Activated CD4-positive, alpha-beta memory T cell treated with anti-CD3 and anti-CD28 coated beads, Interleukin-2, amount 10 ng/mL, durations not matched to agents 7 days and 5 days (primary cell): ENCODE measurements at regions of chr2 and their contacts with region 1.

Region 1: GRCh38 chr2:98771721-98772524 is 41.0 kb upstream of the MGAT4A start:
- DNase-seq: peak; percentile 74
- H3K4me3 Mint-ChIP-seq: peak overlapping the region; percentile 97
- H3K27ac Mint-ChIP-seq: peak overlapping the region; percentile 98
- H3K4me1 Mint-ChIP-seq: peaks cover 63% of the 10 kb centered on the region
- H3K27me3 Mint-ChIP-seq: no peaks in the 10 kb centered on the region

Region 2: DNA sequence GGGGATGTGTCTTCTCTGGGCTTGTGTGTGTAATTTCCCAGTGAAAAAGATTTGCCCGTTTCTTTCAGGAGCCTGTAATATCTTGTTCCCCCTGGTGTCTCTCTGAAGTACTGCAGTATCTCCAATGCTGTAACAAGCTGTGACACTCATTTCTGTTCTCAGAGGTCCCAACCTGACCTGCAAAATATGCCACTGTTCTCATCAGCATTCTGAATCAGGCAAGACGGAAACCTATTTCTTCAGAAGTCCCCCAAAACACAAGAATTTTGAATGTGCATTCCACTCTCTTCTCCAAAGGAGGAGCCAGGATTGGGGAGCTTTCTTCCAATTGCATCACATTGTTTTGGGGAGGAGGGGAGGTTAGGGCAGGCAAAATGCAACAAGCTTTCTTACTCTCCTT is 502.6 kb before region 1 on chr2:
- CTCF ChIA-PET with region 1: no interaction called
- POLR2A ChIA-PET with region 1: no interaction called
- DNase-seq: no peak
- H3K4me3 Mint-ChIP-seq: no peak overlapping the region
- H3K27ac Mint-ChIP-seq: no peak overlapping the region
- H3K4me1 Mint-ChIP-seq: no peaks in the 10 kb centered on the region
- H3K27me3 Mint-ChIP-seq: peaks cover 22% of the 10 kb centered on the region

Region 3: DNA sequence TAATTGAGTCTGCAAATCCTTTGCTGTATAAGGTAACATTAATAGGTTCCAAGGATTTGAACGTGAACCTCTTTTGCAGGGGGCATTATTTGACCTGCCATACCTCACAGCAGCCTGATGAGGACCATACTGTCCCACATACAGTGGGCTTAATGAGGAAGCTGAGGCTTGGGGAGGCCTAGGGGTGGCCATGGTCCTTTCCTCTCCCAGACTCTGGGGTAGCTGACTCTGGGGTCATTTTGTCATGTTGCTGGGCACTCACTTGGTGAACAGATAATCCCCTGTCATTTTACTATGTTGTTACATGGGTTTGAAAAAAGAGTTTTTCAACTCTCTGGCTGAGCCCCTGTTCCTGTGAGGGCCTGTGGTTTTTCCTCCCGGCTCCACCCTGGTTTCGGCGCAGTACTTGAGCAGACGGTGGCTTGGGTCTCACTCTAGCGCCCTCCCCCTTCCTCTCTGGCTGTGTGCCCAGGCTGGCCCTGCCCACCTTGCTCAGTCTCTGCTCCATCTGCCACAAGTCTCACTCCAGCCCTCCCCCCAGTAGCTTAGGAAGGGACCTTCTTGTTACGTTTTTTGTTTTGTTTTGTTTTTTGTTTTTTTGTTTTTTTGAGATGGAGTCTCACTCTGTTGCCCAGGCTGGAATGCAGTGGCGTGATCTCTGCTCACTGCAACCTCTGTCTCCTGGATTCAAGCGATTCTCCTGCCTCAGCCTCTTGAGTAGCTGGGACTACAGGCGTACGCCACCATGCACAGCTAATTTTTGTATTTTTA is 306.3 kb before region 1 on chr2:
- CTCF ChIA-PET with region 1: no interaction called
- POLR2A ChIA-PET with region 1: interaction called, 16 read pairs
- DNase-seq: peak; percentile 85
- H3K4me3 Mint-ChIP-seq: peak overlapping the region; percentile 72
- H3K27ac Mint-ChIP-seq: peak overlapping the region; percentile 100
- H3K4me1 Mint-ChIP-seq: peaks cover 93% of the 10 kb centered on the region
- H3K27me3 Mint-ChIP-seq: no peaks in the 10 kb centered on the region

Region 4: DNA sequence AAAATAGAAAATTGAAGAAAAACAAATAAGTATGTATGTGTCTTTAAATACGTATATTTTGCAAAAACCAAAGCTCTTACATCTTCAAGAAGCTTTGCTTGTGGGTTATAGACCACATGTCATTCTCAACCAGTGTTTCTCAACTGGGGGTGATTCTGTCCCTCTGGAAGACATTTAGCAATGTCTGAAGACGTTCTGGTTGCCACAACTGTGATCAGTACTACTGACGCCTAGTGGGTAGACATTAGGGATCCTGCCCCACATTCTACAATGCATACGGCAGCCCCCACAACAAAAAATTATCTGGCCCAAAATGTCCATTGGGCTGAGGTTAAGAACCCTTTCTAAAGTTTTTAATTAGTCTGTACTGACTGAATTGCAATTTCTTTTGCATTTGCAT is 115.1 kb before region 1 on chr2:
- CTCF ChIA-PET with region 1: interaction called, 10 read pairs
- POLR2A ChIA-PET with region 1: interaction called, 32 read pairs
- DNase-seq: no peak
- H3K4me3 Mint-ChIP-seq: no peak overlapping the region
- H3K27ac Mint-ChIP-seq: peak overlapping the region; percentile 76
- H3K4me1 Mint-ChIP-seq: peaks cover 81% of the 10 kb centered on the region
- H3K27me3 Mint-ChIP-seq: no peaks in the 10 kb centered on the region

Region 5: GRCh38 chr2:98731041-98731893 is 40.7 kb before region 1 on chr2 and contains the start of gene MGAT4A:
- CTCF ChIA-PET with region 1: interaction called, 21 read pairs
- POLR2A ChIA-PET with region 1: interaction called, 291 read pairs
- DNase-seq: peak; percentile 81
- H3K4me3 Mint-ChIP-seq: peak within 1 kb of the TSS; percentile 86
- H3K27ac Mint-ChIP-seq: peak within 1 kb of the TSS; percentile 86
- H3K4me1 Mint-ChIP-seq: peaks cover 71% of the 10 kb centered on the region
- H3K27me3 Mint-ChIP-seq: no peaks in the 10 kb centered on the region
- total RNA-seq, gene MGAT4A: 69.8 to 80.6 TPM

Region 6: GRCh38 chr2:98822301-98823164 is 50.6 kb after region 1 on chr2:
- CTCF ChIA-PET with region 1: interaction called, 4 read pairs
- POLR2A ChIA-PET with region 1: interaction called, 23 read pairs
- DNase-seq: peak; percentile 68
- H3K4me3 Mint-ChIP-seq: peak overlapping the region; percentile 52
- H3K27ac Mint-ChIP-seq: no peak overlapping the region
- H3K4me1 Mint-ChIP-seq: peaks cover 12% of the 10 kb centered on the region
- H3K27me3 Mint-ChIP-seq: peaks cover 19% of the 10 kb centered on the region